CD14-positive monocyte (primary cell): ENCODE measurements at regions of chr12 and their contacts with region 1.

Region 1: DNA sequence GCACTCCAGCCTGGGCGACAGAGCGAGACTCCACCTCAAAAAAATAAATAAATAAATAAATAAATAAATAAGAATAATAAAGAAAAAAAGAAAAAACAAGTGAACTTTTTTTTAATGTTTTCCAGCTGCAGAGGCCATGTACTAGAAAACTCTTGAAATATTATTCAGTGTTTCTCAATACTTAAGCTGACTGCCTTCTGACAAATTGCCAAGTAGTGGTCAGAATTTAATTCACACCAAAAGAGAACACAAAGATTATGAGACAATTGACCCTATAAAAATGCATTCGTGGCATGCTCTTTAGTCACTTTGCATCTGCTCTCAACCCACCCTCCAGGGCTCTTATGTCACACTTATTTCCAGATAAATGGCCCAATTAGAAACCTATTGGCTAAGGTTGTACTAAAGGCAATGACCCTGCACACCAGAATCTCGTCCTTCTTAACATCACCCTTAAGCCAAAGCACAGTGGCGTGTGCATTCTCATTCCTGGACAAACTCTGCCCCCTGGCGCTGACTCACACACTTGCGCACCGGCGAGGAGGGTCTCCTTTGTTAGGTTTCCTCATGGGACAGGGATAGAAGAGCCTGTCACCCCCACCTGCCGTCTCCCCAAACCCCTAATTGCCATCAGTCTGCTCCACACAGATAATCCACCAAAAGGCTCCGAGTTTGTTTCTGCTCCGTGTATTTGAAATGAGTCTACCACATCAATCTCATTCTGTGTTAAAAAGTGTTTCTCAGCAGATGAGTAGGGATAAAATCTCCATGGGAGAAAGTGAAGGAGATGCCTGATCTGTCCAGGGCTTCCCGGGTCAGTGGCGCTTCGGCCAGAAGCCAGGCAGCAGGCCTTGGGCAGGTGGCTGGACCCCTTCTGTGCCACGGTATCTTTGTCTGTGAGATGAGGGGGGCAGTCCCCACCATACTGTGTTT is 73.1 kb upstream of the CEP83 start:
- DNase-seq: peak; percentile 34 to 56 (median 44)
- H3K4me3 ChIP-seq: no peak overlapping the region
- H3K4me3 Mint-ChIP-seq: no peak overlapping the region
- H3K27ac ChIP-seq: no peak overlapping the region
- H3K27ac Mint-ChIP-seq: peak overlapping the region in 2 of 7 donors; percentile 21 to 30
- H3K4me1 ChIP-seq: no peaks in the 10 kb centered on the region
- H3K4me1 Mint-ChIP-seq: peaks cover 6% of the 10 kb centered on the region
- H3K27me3 ChIP-seq: no peaks in the 10 kb centered on the region
- H3K27me3 Mint-ChIP-seq: peaks cover 2 to 6% (median 2%) of the 10 kb centered on the region in 3 donors
- CTCF ChIP-seq: peak; percentile 78

Region 2: GRCh38 chr12:94133964-94134795 is 398.6 kb before region 1 on chr12:
- intact Hi-C with region 1: loop called (anchors 5 kb)
- DNase-seq: peak; percentile 44 to 66 (median 62)
- H3K4me3 ChIP-seq: no peak overlapping the region
- H3K4me3 Mint-ChIP-seq: no peak overlapping the region
- H3K27ac ChIP-seq: no peak overlapping the region
- H3K27ac Mint-ChIP-seq: no peak overlapping the region
- H3K4me1 ChIP-seq: peaks cover 3 to 11% of the 10 kb centered on the region in 2 donors
- H3K4me1 Mint-ChIP-seq: peaks cover 17% of the 10 kb centered on the region
- H3K27me3 ChIP-seq: no peaks in the 10 kb centered on the region
- H3K27me3 Mint-ChIP-seq: peaks cover 0 to 3% (median 1%) of the 10 kb centered on the region in 3 donors
- CTCF ChIP-seq: peak; percentile 85

Region 3: GRCh38 chr12:94139816-94140215 is 392.9 kb before region 1 on chr12:
- intact Hi-C with region 1: loop called (anchors 5 kb)
- DNase-seq: no peak
- H3K4me3 ChIP-seq: no peak overlapping the region
- H3K4me3 Mint-ChIP-seq: no peak overlapping the region
- H3K27ac ChIP-seq: no peak overlapping the region
- H3K27ac Mint-ChIP-seq: no peak overlapping the region
- H3K4me1 ChIP-seq: peaks cover 3 to 5% of the 10 kb centered on the region in 2 donors
- H3K4me1 Mint-ChIP-seq: peaks cover 12% of the 10 kb centered on the region
- H3K27me3 ChIP-seq: no peaks in the 10 kb centered on the region
- H3K27me3 Mint-ChIP-seq: peaks cover 0 to 10% (median 0%) of the 10 kb centered on the region in 3 donors
- CTCF ChIP-seq: no peak

Region 4: DNA sequence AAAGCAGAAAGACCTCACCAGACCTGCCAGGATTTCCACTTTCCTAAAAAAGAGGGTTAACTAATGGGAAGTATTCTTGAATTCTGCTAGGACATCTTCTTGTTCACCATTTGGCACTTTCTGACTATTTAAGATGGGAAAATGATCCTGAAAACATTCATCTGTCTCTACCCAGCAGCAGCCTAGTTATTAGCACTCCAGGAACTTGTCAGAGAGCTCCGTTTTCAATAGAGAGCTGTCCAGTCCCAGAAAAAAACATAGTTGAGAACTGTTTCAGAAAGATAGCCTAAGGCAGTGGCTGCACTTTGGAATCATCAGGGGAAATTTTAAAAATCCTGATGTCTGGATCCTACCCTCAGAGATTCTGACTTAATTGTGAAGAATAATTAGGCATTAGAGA is 51.0 kb before region 1 on chr12:
- intact Hi-C with region 1: no loop called
- DNase-seq: no peak
- H3K4me3 ChIP-seq: no peak overlapping the region
- H3K4me3 Mint-ChIP-seq: no peak overlapping the region
- H3K27ac ChIP-seq: no peak overlapping the region
- H3K27ac Mint-ChIP-seq: no peak overlapping the region
- H3K4me1 ChIP-seq: no peaks in the 10 kb centered on the region
- H3K4me1 Mint-ChIP-seq: no peaks in the 10 kb centered on the region
- H3K27me3 ChIP-seq: no peaks in the 10 kb centered on the region
- H3K27me3 Mint-ChIP-seq: peaks cover 0 to 2% (median 2%) of the 10 kb centered on the region in 3 donors
- CTCF ChIP-seq: no peak